Heart left ventricle (tissue), 16 donors: ENCODE measurements at regions of chr15 and their contacts with region 1.

Region 1: DNA sequence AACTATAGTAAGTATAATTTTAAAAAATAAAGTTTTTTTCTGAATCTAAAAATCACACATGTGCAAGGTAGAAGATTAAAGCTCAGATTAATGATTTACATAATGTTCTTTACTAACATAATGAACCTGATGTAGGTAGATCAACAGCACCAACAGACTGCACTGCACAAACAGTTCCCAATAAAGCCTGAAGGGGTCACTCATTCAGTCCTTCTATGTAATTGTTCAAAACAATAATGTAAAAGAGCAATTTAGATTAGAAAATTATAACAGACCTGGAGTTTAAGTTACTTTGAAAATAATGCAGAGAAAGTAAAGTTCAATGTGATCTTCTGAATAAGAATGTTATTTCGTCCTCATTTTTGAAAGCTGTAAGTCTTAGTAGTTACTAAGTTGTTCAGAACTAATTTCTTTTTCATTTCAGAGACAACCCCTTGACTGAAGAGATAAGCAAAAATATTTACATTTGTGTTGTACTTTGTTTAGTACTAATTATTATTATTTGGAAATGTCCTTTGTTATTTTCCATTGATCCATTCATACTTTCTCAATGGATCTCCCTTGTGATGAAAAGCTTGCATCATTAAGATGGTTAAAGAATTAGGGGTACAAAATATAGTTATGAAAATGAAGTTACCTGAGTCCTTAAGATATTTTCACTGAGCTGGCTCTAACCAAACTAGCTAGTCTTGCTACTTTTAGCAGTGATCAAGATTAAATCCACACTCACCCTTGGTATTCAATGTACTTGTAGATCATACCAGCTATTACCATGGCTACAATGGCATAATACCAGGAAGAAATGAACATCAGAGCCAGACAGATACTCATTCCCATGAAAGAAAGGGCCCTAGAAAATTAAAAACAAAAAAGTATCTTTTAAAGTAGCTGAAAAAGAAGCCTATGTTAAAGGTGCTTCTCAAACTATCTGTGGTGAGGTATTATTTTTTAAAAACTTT is 16.8 kb downstream of the EMC4 start:
- DNase-seq: no peak
- ATAC-seq: peak in 3 of 4 donors; percentile 53 to 63 (median 58)
- H3K4me3 ChIP-seq: no peak overlapping the region
- H3K27ac ChIP-seq: no peak overlapping the region
- H3K4me1 ChIP-seq: no peaks in the 10 kb centered on the region
- H3K27me3 ChIP-seq: no peaks in the 10 kb centered on the region
- CTCF ChIP-seq: peak; percentile 57 to 87 (median 77)
- POLR2A ChIP-seq: no peak

Region 2: GRCh38 chr15:33872416-33873106 is 369.1 kb before region 1 on chr15:
- intact Hi-C with region 1: no loop called
- DNase-seq: no peak
- ATAC-seq: no peak
- H3K4me3 ChIP-seq: no peak overlapping the region
- H3K27ac ChIP-seq: no peak overlapping the region
- H3K4me1 ChIP-seq: no peaks in the 10 kb centered on the region
- H3K27me3 ChIP-seq: no peaks in the 10 kb centered on the region
- CTCF ChIP-seq: no peak
- POLR2A ChIP-seq: no peak

Region 3: DNA sequence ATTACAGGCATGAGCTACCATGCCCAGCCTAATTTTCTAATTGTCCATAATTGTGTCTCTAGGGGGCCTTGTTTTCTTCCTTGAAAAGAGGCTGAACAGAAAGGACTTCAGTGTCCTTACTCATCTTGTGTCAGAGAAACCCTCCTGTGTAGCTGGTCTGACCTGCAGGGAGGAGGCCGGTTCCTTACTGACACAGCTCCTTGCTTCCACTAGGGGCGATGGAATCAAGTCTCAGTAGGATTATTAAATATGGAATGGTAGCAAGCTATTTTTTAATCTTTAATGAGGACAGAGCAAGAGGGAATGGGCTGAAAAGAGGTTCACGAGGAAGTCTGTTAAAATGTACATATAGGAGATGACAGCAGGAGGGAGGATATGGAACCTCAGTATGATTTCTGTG is 116.7 kb after region 1 on chr15:
- intact Hi-C with region 1: loop called in 4 of 10 experiments (anchors 5 to 10 kb)
- DNase-seq: no peak
- ATAC-seq: no peak
- H3K4me3 ChIP-seq: no peak overlapping the region
- H3K27ac ChIP-seq: no peak overlapping the region
- H3K4me1 ChIP-seq: no peaks in the 10 kb centered on the region
- H3K27me3 ChIP-seq: no peaks in the 10 kb centered on the region
- CTCF ChIP-seq: no peak
- POLR2A ChIP-seq: no peak

Region 4: DNA sequence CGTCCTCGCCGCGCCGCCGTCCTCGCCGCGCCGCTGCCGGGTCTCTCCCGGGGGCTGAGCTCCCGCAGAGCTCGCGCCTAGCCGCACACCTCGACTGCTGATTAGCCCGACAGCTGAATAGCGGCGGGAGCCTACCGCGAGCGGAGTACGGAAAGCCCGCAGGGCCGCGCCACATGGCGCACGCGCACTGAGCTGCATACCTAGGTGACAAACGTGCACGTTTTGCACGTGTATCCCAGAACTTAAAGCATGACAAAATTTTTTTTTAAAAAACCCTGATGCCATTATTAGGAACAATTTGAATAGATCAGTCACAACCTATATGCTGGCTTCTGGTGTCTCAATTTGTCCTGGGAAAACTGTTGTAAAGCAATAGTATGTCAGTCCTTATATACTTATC is 196.0 kb after region 1 on chr15 and contains the start of gene GOLGA8A:
- intact Hi-C with region 1: loop called in 2 of 10 experiments (anchors 10 kb)
- DNase-seq: peak; percentile 60 to 89 (median 71)
- ATAC-seq: peak in 3 of 4 donors; percentile 66 to 75 (median 73)
- H3K4me3 ChIP-seq: peak within 1 kb of the TSS; percentile 44 to 89 (median 62)
- H3K27ac ChIP-seq: peak within 1 kb of the TSS in 5 of 12 donors; percentile 6 to 45 (median 30)
- H3K4me1 ChIP-seq: peaks cover 0 to 20% (median 4%) of the 10 kb centered on the region in 12 donors
- H3K27me3 ChIP-seq: peaks cover 0 to 9% (median 0%) of the 10 kb centered on the region in 9 donors
- CTCF ChIP-seq: no peak
- POLR2A ChIP-seq: no peak
- total RNA-seq, gene GOLGA8A: 1.1 to 21.6 (median 8.9) TPM

Region 5: GRCh38 chr15:34594361-34594760 is 352.7 kb after region 1 on chr15:
- intact Hi-C with region 1: loop called in 3 of 10 experiments (anchors 10 kb)
- DNase-seq: no peak
- ATAC-seq: no peak
- H3K4me3 ChIP-seq: no peak overlapping the region
- H3K27ac ChIP-seq: no peak overlapping the region
- H3K4me1 ChIP-seq: no peaks in the 10 kb centered on the region
- H3K27me3 ChIP-seq: peaks cover 0 to 3% (median 0%) of the 10 kb centered on the region in 9 donors
- CTCF ChIP-seq: no peak
- POLR2A ChIP-seq: no peak